ENCODE measurements at regions of chr10 and their contacts with region 1.

Region 1: DNA sequence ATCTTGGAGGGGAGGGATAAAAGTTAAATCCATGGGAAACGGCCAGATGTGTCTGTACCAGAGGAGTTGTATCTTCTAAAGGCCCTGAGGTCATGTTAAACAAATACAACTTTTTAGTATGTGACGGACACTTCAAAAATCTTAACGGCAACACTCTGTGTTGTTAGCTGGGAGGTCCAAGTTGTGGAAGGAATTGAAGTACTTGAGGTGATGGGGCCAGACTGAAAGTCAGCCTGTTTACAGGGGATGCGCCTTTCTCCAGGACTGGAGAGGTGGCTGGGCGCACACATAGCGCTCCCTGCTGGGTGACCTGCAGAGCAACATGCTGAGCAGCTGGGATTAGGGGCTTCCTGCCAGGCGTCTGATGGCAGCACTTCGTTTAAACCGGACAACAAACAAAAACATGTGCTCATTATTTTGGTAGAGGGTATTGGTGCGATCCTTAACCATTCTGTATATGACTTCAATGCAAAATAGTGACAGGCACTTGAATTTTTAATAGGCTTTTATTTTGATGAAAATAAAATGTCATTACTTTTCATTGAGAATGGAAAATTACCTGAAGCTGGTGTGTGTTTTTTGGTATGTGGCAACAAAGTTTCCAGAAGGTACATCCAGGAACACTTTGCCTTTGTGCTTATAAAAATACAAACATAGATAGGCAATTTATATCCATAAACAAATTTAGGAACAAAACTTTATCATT is 198.2 kb downstream of the MLLT10 start:
- DNase-seq: peak; percentile 71
- ATAC-seq: peak; percentile 94

Region 2: DNA sequence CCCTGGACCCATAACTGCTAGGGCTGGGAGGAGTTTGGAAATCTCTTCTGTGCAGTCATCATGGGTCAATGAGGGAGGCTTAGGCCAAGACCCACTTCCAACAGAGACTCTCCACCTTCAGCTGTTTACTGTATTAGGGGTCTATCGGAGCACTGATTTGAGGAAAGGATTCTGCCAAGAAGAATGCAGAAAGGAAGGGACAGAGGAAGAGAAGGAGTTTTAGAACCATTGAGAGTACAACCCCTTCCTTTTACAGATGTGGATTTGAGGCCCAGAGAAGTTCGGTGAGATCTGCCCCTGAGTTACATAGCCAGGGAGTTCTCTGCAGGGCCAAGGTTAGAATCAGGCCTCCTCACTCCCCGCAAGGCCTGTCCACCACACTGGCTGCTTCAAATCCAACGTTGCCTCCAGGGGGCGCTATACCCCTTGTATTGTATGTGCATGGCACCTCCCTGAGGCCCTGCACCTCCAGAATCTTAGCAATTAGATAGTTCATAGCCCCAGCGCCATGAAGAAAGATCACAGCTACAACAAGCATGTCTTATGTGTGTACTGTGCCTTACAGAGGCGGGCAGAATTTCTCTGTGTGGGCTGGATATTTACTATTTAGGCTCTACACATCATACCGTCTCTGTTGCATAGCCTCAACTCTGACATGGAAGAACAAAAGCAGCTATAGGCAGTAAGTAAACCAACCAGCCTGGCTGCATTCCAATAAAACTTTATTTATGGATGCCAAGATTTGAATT is 453.6 kb before region 1 on chr10:
- intact Hi-C with region 1: loop called (anchors 5 kb)
- DNase-seq: peak; percentile 97
- ATAC-seq: peak; percentile 99